Activated CD4-positive, alpha-beta memory T cell treated with anti-CD3 and anti-CD28 coated beads for 36 hours (primary cell): ENCODE measurements at regions of chr11 and their contacts with region 1.

Region 1: DNA sequence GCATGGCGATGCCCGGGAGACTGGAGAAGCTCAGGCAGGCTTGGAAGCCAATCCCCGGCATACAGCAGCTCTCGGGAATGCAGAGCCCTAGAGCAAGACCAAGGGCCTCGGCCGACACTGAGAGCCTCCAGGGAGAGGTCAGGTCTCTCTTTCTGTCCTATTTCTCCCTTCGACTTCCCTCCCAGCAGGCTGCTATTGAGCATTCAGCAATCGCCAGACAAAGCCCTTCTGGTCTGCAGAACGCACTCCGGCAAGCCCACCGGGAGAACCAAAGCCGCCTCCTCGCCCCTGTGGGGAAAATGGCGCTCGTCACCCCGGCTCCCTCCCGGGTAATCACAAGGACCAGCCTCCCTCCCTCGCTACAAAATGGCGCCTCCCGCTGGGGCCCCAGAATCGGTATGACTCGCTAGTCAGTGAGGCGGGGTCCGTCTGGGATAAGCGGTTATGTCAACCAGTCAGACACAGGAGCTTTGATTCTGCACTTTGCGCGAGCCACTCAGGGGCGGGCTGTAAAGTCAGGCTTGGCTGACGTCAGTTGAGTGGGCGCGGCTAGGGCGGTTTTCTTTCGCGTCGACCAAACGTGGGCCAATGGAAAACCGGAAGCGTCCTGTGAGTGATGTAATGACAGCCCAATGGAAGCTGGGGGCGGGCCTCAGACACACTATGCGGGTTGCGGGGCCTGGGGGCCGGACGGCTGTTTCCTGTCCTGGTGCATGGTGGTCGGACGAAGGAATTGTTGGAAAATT is at the start of gene ZNF143:
- DNase-seq: peak; percentile 100
- H3K4me3 Mint-ChIP-seq: peak within 1 kb of the TSS; percentile 95
- H3K27ac Mint-ChIP-seq: peak within 1 kb of the TSS; percentile 99
- H3K4me1 Mint-ChIP-seq: peaks cover 21% of the 10 kb centered on the region
- H3K27me3 Mint-ChIP-seq: no peaks in the 10 kb centered on the region
- total RNA-seq, gene ZNF143: 45.4 to 48.2 TPM

Region 2: DNA sequence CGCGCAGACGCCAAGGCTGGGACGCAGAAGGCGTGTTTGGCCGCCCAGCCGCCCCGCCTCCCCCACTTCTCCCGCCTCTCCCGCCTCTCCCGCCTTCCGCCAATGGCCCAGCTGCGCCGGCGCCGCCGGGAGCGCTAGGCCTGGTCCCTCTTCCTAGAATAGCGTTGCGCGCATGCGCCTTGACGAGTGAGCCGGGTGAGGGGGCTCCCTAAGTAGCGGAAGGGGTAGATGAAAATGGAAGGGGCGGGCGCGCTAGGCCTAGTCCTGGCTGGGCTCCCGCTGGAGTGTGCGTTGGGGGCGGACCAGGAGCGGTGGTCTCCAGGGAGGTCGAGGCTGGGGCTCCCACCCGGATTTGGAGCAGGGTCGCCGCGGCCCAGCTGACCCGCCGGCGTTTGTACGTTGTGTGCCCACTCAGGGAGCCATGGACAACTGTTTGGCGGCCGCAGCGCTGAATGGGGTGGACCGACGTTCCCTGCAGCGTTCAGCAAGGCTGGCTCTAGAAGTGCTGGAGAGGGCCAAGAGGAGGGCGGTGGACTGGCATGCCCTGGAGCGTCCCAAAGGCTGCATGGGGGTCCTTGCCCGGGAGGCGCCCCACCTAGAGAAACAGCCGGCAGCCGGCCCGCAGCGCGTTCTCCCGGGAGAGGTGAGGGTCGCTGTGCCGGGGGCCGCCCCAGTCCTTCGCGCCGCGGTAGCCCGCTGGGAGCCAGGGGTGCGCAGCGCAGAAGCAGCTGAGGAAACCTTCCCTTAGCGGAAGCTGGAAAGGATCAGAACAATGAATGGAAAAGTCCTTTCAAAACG is 549.3 kb before region 1 on chr11 and contains the start of gene AKIP1:
- CTCF ChIA-PET with region 1: no interaction called
- POLR2A ChIA-PET with region 1: no interaction called
- intact Hi-C with region 1: loop called (anchors 1 kb)
- DNase-seq: peak; percentile 91
- H3K4me3 Mint-ChIP-seq: peak within 1 kb of the TSS; percentile 94
- H3K27ac Mint-ChIP-seq: peak within 1 kb of the TSS; percentile 86
- H3K4me1 Mint-ChIP-seq: peaks cover 45% of the 10 kb centered on the region
- H3K27me3 Mint-ChIP-seq: no peaks in the 10 kb centered on the region
- total RNA-seq, gene AKIP1: 37.9 to 39.9 TPM

Region 3: GRCh38 chr11:9250139-9250582 is 210.3 kb before region 1 on chr11:
- CTCF ChIA-PET with region 1: no interaction called
- POLR2A ChIA-PET with region 1: interaction called, 5 read pairs
- intact Hi-C with region 1: loop called (anchors 1 kb)
- DNase-seq: peak; percentile 55
- H3K4me3 Mint-ChIP-seq: peak overlapping the region; percentile 15
- H3K27ac Mint-ChIP-seq: peak overlapping the region; percentile 67
- H3K4me1 Mint-ChIP-seq: peaks cover 51% of the 10 kb centered on the region
- H3K27me3 Mint-ChIP-seq: no peaks in the 10 kb centered on the region

Region 4: GRCh38 chr11:9363954-9364912 is 96.3 kb before region 1 on chr11:
- CTCF ChIA-PET with region 1: interaction called, 3 read pairs
- POLR2A ChIA-PET with region 1: interaction called, 4 read pairs
- intact Hi-C with region 1: loop called (anchors 5 kb)
- DNase-seq: peak; percentile 93
- H3K4me3 Mint-ChIP-seq: peak overlapping the region; percentile 74
- H3K27ac Mint-ChIP-seq: peak overlapping the region; percentile 88
- H3K4me1 Mint-ChIP-seq: peaks cover 35% of the 10 kb centered on the region
- H3K27me3 Mint-ChIP-seq: no peaks in the 10 kb centered on the region

Region 5: DNA sequence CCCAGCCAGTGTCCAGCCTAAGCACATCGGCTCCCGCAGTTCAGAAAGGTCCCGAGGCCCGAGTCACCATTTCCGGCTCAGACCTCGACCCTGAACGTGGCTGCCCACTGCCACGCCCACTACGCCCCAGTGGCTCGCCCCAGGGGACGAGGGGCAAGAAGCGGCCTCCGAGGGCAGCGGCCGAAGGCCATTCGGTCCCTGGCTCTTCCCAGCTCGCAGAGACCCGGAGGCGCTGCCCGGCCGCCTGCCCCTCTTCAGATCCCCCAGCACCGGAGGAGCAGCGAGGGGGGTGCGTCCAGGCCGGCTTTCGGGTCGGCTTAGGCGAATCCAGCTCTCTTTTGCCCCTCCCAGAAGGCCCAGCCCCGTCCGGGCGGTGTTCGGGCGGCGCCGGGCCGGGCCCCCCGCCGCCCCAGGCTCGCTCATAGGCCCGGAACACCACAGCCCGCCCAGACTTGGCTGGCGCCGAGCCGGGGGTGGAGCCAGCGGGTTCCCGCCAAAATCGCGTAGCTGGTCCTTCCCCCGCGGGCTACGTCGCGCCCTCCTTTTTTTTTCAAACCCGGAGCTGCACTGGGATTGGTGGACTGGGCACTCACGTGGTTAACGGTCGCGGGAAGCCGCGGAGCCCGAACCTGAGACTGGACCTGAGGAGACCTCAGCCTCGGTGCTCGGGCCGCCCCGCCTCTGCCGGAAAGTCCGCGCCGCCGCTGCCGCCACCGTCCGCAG is 112.7 kb after region 1 on chr11 and contains the start of gene WEE1:
- CTCF ChIA-PET with region 1: interaction called, 4 read pairs
- POLR2A ChIA-PET with region 1: interaction called, 15 read pairs
- intact Hi-C with region 1: loop called (anchors 1 kb)
- DNase-seq: peak; percentile 99
- H3K4me3 Mint-ChIP-seq: peak within 1 kb of the TSS; percentile 97
- H3K27ac Mint-ChIP-seq: peak within 1 kb of the TSS; percentile 82
- H3K4me1 Mint-ChIP-seq: peaks cover 36% of the 10 kb centered on the region
- H3K27me3 Mint-ChIP-seq: no peaks in the 10 kb centered on the region
- total RNA-seq, gene WEE1: 47.8 to 52.4 TPM

Region 6: DNA sequence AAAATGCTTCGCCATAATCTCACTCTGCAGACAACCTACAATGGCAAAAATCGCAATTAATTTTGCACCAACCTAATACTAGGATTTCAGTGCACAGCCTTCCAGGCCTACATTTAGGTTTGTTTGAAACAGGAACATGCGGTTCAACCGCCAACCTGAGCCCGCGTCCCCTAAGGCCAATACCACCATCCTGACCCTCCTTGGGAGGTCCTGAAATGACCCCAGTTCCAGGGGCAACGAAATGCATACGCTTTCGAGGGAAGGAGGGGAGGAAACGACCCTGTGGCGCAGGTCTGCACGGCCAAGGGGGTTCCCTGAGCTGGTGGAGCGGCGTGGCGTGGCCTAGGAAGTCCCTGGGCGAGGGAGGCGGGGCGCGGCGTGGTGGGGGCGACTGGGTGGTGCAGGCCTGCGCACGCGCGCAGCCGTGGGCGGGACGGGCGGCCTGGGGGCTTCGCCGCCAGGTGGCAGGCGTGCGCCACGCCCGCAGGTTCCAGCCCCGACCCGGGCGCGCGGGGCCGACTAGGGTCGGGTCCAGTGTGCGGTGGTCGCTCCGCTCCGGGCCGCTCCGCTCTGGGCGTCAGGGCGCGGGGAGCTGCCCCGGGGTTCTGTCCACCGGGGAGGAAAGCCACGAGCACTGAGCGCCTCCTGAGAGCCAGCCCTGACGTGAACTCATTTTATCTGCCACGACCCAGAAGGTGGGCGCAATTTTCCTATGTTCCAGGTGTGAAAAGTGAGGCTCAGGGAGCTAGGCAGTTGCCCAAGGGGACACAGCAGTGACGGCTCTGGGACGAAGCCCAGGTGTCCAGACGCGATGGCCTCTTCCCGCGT is 297.5 kb after region 1 on chr11:
- CTCF ChIA-PET with region 1: no interaction called
- POLR2A ChIA-PET with region 1: interaction called, 4 read pairs
- intact Hi-C with region 1: loop called (anchors 2 kb)
- DNase-seq: peak; percentile 95
- H3K4me3 Mint-ChIP-seq: peak overlapping the region; percentile 75
- H3K27ac Mint-ChIP-seq: peak overlapping the region; percentile 79
- H3K4me1 Mint-ChIP-seq: peaks cover 34% of the 10 kb centered on the region
- H3K27me3 Mint-ChIP-seq: no peaks in the 10 kb centered on the region

Region 7: GRCh38 chr11:10808553-10809372 is 1348.3 kb after region 1 on chr11 and contains the start of gene EIF4G2:
- CTCF ChIA-PET with region 1: no interaction called
- POLR2A ChIA-PET with region 1: no interaction called
- intact Hi-C with region 1: loop called (anchors 2 kb)
- DNase-seq: peak; percentile 99
- H3K4me3 Mint-ChIP-seq: peak within 1 kb of the TSS; percentile 91
- H3K27ac Mint-ChIP-seq: peak within 1 kb of the TSS; percentile 98
- H3K4me1 Mint-ChIP-seq: peaks cover 46% of the 10 kb centered on the region
- H3K27me3 Mint-ChIP-seq: no peaks in the 10 kb centered on the region
- total RNA-seq, gene EIF4G2: 794 to 835 TPM